Naive thymus-derived CD4-positive, alpha-beta T cell (primary cell): ENCODE measurements at regions of chr2 and their contacts with region 1.

Region 1: GRCh38 chr2:130797493-130798435 is 39.0 kb upstream of the ARHGEF4 start:
- DNase-seq: peak; percentile 78 to 95 (median 88)
- ATAC-seq: peak; percentile 94
- H3K4me3 ChIP-seq: peak overlapping the region; percentile 97
- H3K4me3 Mint-ChIP-seq: peak overlapping the region; percentile 58 to 82 (median 73)
- H3K27ac ChIP-seq: peak overlapping the region; percentile 78
- H3K27ac Mint-ChIP-seq: peak overlapping the region in 5 of 9 donors; percentile 8 to 78 (median 50)
- H3K4me1 ChIP-seq: peaks cover 0 to 3% of the 10 kb centered on the region in 2 donors
- H3K4me1 Mint-ChIP-seq: peaks cover 0 to 15% (median 4%) of the 10 kb centered on the region in 7 donors
- H3K27me3 ChIP-seq: no peaks in the 10 kb centered on the region
- H3K27me3 Mint-ChIP-seq: peaks cover 0 to 15% (median 0%) of the 10 kb centered on the region in 5 donors

Region 2: GRCh38 chr2:130019402-130019801 is 778.4 kb before region 1 on chr2:
- CTCF ChIA-PET with region 1: no interaction called
- POLR2A ChIA-PET with region 1: no interaction called
- intact Hi-C with region 1: no loop called
- DNase-seq: no peak
- ATAC-seq: no peak
- H3K4me3 ChIP-seq: no peak overlapping the region
- H3K4me3 Mint-ChIP-seq: no peak overlapping the region
- H3K27ac ChIP-seq: no peak overlapping the region
- H3K27ac Mint-ChIP-seq: no peak overlapping the region
- H3K4me1 ChIP-seq: no peaks in the 10 kb centered on the region
- H3K4me1 Mint-ChIP-seq: no peaks in the 10 kb centered on the region
- H3K27me3 ChIP-seq: no peaks in the 10 kb centered on the region
- H3K27me3 Mint-ChIP-seq: peaks cover 0 to 27% (median 22%) of the 10 kb centered on the region in 5 donors

Region 3: DNA sequence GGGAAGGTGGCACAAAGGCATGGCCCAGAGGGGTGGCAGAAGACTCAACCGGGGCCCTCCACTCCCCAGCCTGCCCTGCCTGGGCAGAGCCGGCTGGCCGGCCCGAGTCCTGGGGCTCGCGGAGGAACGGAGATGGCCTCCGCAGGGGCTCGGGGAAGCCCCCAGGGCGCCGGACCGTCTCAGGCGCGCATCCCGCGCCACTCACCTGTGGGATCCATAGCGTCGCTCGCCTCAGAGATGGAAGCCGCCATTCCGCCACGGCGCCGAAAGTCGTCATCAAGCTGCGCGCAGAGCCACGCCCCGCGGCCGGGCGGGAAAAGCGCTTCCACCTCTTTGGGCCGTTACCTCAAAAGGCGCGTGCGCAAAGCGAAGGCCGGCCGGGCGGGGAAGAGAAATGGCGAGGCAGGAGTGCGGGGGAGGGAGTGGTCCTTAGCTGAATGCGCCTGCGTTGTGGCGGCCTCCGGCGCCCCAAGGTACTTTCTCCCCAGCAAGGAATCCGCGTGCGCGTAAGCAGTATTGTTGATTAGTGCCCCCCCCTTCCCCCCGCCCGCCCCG is 616.4 kb before region 1 on chr2 and contains the start of gene SMPD4:
- CTCF ChIA-PET with region 1: no interaction called
- POLR2A ChIA-PET with region 1: interaction called, 3 read pairs
- intact Hi-C with region 1: loop called (anchors 1 to 5 kb)
- DNase-seq: peak; percentile 96 to 98 (median 98)
- ATAC-seq: peak; percentile 84
- H3K4me3 ChIP-seq: peak within 1 kb of the TSS; percentile 77
- H3K4me3 Mint-ChIP-seq: peak within 1 kb of the TSS; percentile 87 to 94 (median 91)
- H3K27ac ChIP-seq: peak within 1 kb of the TSS; percentile 91
- H3K27ac Mint-ChIP-seq: peak within 1 kb of the TSS; percentile 87 to 97 (median 95)
- H3K4me1 ChIP-seq: peaks cover 8 to 18% of the 10 kb centered on the region in 2 donors
- H3K4me1 Mint-ChIP-seq: peaks cover 18 to 35% (median 24%) of the 10 kb centered on the region in 7 donors
- H3K27me3 ChIP-seq: no peaks in the 10 kb centered on the region
- H3K27me3 Mint-ChIP-seq: no peaks in the 10 kb centered on the region
- total RNA-seq, gene SMPD4: 52.5 to 82.9 (median 59.8) TPM

Region 4: GRCh38 chr2:130824492-130825061 is 26.8 kb after region 1 on chr2:
- CTCF ChIA-PET with region 1: interaction called, 5 read pairs
- POLR2A ChIA-PET with region 1: no interaction called
- intact Hi-C with region 1: loop called (anchors 1 kb)
- DNase-seq: peak in 7 of 9 donors; percentile 25 to 75 (median 54)
- ATAC-seq: peak; percentile 85
- H3K4me3 ChIP-seq: no peak overlapping the region
- H3K4me3 Mint-ChIP-seq: peak overlapping the region in 2 of 10 donors; percentile 24 to 60
- H3K27ac ChIP-seq: no peak overlapping the region
- H3K27ac Mint-ChIP-seq: peak overlapping the region in 7 of 9 donors; percentile 41 to 83 (median 68)
- H3K4me1 ChIP-seq: peaks cover 11 to 14% of the 10 kb centered on the region in 2 donors
- H3K4me1 Mint-ChIP-seq: peaks cover 5 to 19% (median 9%) of the 10 kb centered on the region in 7 donors
- H3K27me3 ChIP-seq: no peaks in the 10 kb centered on the region
- H3K27me3 Mint-ChIP-seq: peaks cover 0 to 15% (median 0%) of the 10 kb centered on the region in 5 donors

Region 5: DNA sequence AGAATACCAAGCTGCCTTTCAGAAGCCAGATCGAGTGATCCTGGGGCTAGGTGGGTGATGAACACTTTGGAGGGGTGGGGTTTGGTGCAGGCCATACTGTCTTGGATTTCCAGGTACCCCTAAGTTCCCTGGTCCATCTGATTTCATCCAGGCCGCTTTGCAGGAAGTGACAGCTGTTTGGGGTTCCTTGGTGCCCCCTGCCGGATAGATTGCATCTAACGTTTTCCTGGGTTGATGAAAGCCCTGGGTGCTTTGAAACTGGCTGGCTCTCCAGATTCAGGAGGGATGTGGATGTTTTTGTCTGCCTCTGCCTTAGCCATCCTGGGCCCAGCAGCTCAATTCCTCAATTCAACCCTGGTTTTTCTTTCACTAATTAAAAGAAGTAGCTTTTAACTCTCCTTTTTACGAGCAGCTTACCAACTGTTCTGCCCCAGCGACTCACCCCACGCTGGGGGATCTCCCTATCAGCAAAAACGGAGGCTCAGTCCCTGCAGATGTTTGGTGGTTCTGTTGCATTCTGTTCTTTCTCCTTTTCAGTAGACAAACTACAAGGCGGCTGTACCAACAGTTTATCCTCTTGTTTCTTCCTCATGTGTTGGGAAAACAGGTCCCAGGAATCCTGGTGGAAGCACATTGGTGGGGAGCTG is 76.1 kb after region 1 on chr2:
- CTCF ChIA-PET with region 1: interaction called, 55 read pairs
- POLR2A ChIA-PET with region 1: interaction called, 4 read pairs
- intact Hi-C with region 1: loop called (anchors 1 kb)
- DNase-seq: peak; percentile 24 to 67 (median 49)
- ATAC-seq: peak; percentile 76
- H3K4me3 ChIP-seq: no peak overlapping the region
- H3K4me3 Mint-ChIP-seq: no peak overlapping the region
- H3K27ac ChIP-seq: no peak overlapping the region
- H3K27ac Mint-ChIP-seq: no peak overlapping the region
- H3K4me1 ChIP-seq: no peaks in the 10 kb centered on the region
- H3K4me1 Mint-ChIP-seq: no peaks in the 10 kb centered on the region
- H3K27me3 ChIP-seq: no peaks in the 10 kb centered on the region
- H3K27me3 Mint-ChIP-seq: peaks cover 0 to 19% (median 4%) of the 10 kb centered on the region in 5 donors

Region 6: DNA sequence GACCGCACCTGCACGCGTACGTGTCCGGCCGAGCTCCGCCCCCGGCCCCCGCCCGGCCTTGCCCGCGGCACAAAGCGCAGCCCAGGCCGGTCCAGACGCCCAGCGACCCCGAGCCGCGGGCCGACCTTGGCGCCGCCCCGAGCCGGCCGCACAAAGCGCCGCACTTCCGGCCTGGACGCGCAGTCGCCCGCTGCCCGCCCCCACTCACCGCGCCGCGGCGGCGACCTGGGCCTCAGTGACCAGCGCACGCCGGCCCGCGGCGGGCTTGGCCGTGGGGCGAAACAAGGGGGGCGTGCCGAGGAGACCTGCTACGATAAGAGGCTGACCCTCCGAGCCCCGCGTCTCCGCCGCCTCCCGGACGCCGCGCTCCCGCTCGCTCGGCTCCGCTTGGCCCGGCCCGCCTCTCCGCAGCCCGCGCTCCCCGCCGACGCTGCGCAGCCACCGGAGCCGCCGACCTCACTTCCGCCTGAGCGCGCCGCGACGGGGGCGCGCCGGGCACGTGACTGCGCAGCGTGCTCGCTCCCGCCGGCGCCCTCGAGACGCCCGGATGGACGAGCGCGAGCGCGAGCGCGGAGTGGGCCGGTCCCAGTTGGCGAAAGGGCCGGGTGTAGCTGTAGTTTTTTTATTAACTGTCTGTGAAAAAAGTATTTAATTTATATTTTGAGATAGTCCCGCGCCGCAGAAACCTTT is 295.4 kb after region 1 on chr2 and contains the start of gene FAM168B:
- CTCF ChIA-PET with region 1: no interaction called
- POLR2A ChIA-PET with region 1: interaction called, 3 read pairs
- intact Hi-C with region 1: loop called (anchors 5 kb)
- DNase-seq: peak; percentile 82 to 96 (median 92)
- ATAC-seq: peak; percentile 92
- H3K4me3 ChIP-seq: peak within 1 kb of the TSS; percentile 81
- H3K4me3 Mint-ChIP-seq: peak within 1 kb of the TSS; percentile 82 to 98 (median 94)
- H3K27ac ChIP-seq: peak within 1 kb of the TSS; percentile 99
- H3K27ac Mint-ChIP-seq: peak within 1 kb of the TSS; percentile 88 to 97 (median 96)
- H3K4me1 ChIP-seq: peaks cover 0 to 12% of the 10 kb centered on the region in 2 donors
- H3K4me1 Mint-ChIP-seq: peaks cover 7 to 37% (median 24%) of the 10 kb centered on the region in 7 donors
- H3K27me3 ChIP-seq: no peaks in the 10 kb centered on the region
- H3K27me3 Mint-ChIP-seq: no peaks in the 10 kb centered on the region
- total RNA-seq, gene FAM168B: 50.5 to 82.9 (median 66.7) TPM

Region 7: GRCh38 chr2:131413148-131413747 is 615.5 kb after region 1 on chr2:
- CTCF ChIA-PET with region 1: no interaction called
- POLR2A ChIA-PET with region 1: no interaction called
- intact Hi-C with region 1: loop called in 1 of 2 experiments (anchors 5 kb)
- DNase-seq: peak in 5 of 9 donors; percentile 36 to 48 (median 42)
- ATAC-seq: peak; percentile 75
- H3K4me3 ChIP-seq: no peak overlapping the region
- H3K4me3 Mint-ChIP-seq: no peak overlapping the region
- H3K27ac ChIP-seq: no peak overlapping the region
- H3K27ac Mint-ChIP-seq: no peak overlapping the region
- H3K4me1 ChIP-seq: no peaks in the 10 kb centered on the region
- H3K4me1 Mint-ChIP-seq: peaks cover 0 to 10% (median 0%) of the 10 kb centered on the region in 7 donors
- H3K27me3 ChIP-seq: peaks cover 0 to 3% of the 10 kb centered on the region in 2 donors
- H3K27me3 Mint-ChIP-seq: peaks cover 20 to 57% (median 44%) of the 10 kb centered on the region in 5 donors